ENCODE measurements at regions of chr1 and their contacts with region 1.

Region 1: GRCh38 chr1:9700340-9700739 is 48.8 kb downstream of the PIK3CD start:
- DNase-seq: no peak
- H3K4me3 ChIP-seq: no peak overlapping the region
- H3K4me3 Mint-ChIP-seq: no peak overlapping the region
- H3K27ac ChIP-seq: no peak overlapping the region
- H3K27ac Mint-ChIP-seq: peak overlapping the region in 5 of 7 donors; percentile 46 to 80 (median 71)
- H3K4me1 ChIP-seq: peaks cover 59% of the 10 kb centered on the region
- H3K4me1 Mint-ChIP-seq: peaks cover 41 to 74% (median 57%) of the 10 kb centered on the region in 4 donors
- H3K27me3 ChIP-seq: no peaks in the 10 kb centered on the region
- H3K27me3 Mint-ChIP-seq: no peaks in the 10 kb centered on the region

Region 2: GRCh38 chr1:9689011-9689706 is 11.2 kb before region 1 on chr1:
- CTCF ChIA-PET with region 1: interaction called, 13 read pairs
- POLR2A ChIA-PET with region 1: interaction called, 3 read pairs
- intact Hi-C with region 1: no loop called
- DNase-seq: peak; percentile 75 to 80 (median 78)
- H3K4me3 ChIP-seq: peak overlapping the region; percentile 57 to 63
- H3K4me3 Mint-ChIP-seq: peak overlapping the region; percentile 61 to 89 (median 78)
- H3K27ac ChIP-seq: peak overlapping the region; percentile 37
- H3K27ac Mint-ChIP-seq: peak overlapping the region in 4 of 7 donors; percentile 46 to 85 (median 52)
- H3K4me1 ChIP-seq: peaks cover 77% of the 10 kb centered on the region
- H3K4me1 Mint-ChIP-seq: peaks cover 38 to 80% (median 60%) of the 10 kb centered on the region in 4 donors
- H3K27me3 ChIP-seq: no peaks in the 10 kb centered on the region
- H3K27me3 Mint-ChIP-seq: no peaks in the 10 kb centered on the region